Activated CD4-positive, alpha-beta memory T cell treated with anti-CD3 and anti-CD28 coated beads for 36 hours (primary cell): ENCODE measurements at regions of chr17 and their contacts with region 1.

Region 1: GRCh38 chr17:11997147-11997846 is at the start of gene ZNF18:
- DNase-seq: peak; percentile 96
- H3K4me3 Mint-ChIP-seq: peak within 1 kb of the TSS; percentile 86
- H3K27ac Mint-ChIP-seq: peak within 1 kb of the TSS; percentile 89
- H3K4me1 Mint-ChIP-seq: peaks cover 13% of the 10 kb centered on the region
- H3K27me3 Mint-ChIP-seq: no peaks in the 10 kb centered on the region
- total RNA-seq, gene ZNF18: 6.5 TPM

Region 2: GRCh38 chr17:10697092-10698081 is 1299.9 kb before region 1 on chr17 and contains the starts of genes ADPRM and SCO1:
- CTCF ChIA-PET with region 1: no interaction called
- POLR2A ChIA-PET with region 1: no interaction called
- intact Hi-C with region 1: loop called (anchors 5 kb)
- DNase-seq: peak; percentile 94
- H3K4me3 Mint-ChIP-seq: peak within 1 kb of the TSS; percentile 92
- H3K27ac Mint-ChIP-seq: peak within 1 kb of the TSS; percentile 93
- H3K4me1 Mint-ChIP-seq: peaks cover 52% of the 10 kb centered on the region
- H3K27me3 Mint-ChIP-seq: no peaks in the 10 kb centered on the region
- total RNA-seq, gene ADPRM: 12.4 to 13.5 TPM
- total RNA-seq, gene SCO1: 34.6 to 36.4 TPM

Region 3: DNA sequence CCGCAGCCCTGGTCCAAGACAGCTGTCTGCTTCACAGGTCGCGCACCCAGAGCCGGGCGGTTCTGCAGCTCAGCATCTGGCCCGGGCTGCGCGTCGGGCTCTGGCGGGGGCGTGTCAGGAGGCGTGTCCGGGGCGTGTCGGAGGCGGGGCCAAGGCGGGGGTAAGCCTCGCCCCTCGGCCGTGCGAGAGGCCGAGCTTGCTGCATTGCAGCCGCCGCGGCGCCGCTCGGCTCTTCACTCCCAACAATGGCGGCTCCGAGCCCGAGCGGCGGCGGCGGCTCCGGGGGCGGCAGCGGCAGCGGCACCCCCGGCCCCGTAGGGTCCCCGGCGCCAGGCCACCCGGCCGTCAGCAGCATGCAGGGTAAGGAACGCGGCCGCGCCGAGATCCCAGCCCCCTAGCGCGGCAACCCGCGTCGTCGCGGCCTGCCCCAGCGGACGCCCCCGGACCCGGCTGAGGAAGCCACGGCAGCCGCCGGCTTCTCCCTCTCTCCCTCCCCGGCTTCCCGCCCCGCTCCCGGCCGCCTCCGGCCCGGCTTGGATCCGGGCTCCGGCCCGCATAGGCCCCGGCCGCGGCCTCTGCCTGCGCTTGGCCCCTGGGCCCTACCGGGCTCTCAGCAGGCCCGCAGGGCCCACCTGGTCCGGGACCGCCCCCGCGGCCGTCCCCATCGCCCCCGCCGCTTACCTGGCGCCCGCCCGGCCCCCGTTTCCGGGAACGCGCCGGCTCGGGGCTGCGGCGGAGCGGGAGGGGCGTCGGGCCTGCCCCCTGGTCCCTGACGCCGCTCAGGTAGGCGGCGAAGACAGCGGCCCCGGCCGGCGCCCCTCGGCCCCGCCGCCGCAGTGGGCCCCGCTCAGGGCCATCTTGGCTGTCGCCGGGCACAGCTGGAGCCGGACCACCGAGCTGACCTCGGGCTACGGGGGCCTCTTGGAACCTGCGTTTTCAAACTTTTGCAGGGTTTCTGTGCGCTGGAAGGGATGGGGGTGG is 23.6 kb after region 1 on chr17 and contains the start of gene MAP2K4:
- CTCF ChIA-PET with region 1: interaction called, 11 read pairs
- POLR2A ChIA-PET with region 1: interaction called, 89 read pairs
- intact Hi-C with region 1: loop called (anchors 1 kb)
- DNase-seq: peak; percentile 95
- H3K4me3 Mint-ChIP-seq: peak within 1 kb of the TSS; percentile 75
- H3K27ac Mint-ChIP-seq: peak within 1 kb of the TSS; percentile 18
- H3K4me1 Mint-ChIP-seq: peaks cover 44% of the 10 kb centered on the region
- H3K27me3 Mint-ChIP-seq: no peaks in the 10 kb centered on the region
- total RNA-seq, gene MAP2K4: 22.0 to 27.2 TPM

Region 4: GRCh38 chr17:13017659-13018459 is 1020.6 kb after region 1 on chr17 and contains the start of gene ELAC2:
- CTCF ChIA-PET with region 1: no interaction called
- POLR2A ChIA-PET with region 1: no interaction called
- intact Hi-C with region 1: loop called (anchors 1 kb)
- DNase-seq: peak; percentile 97
- H3K4me3 Mint-ChIP-seq: peak within 1 kb of the TSS; percentile 94
- H3K27ac Mint-ChIP-seq: peak within 1 kb of the TSS; percentile 97
- H3K4me1 Mint-ChIP-seq: peaks cover 26% of the 10 kb centered on the region
- H3K27me3 Mint-ChIP-seq: no peaks in the 10 kb centered on the region
- total RNA-seq, gene ELAC2: 63.1 to 64.2 TPM